ENCODE measurements at regions of chr9 and their contacts with region 1.

Region 1: GRCh38 chr9:92917176-92917800 is 30.0 kb upstream of the FGD3 start:
- DNase-seq: no peak
- H3K4me3 ChIP-seq: no peak overlapping the region
- H3K27ac ChIP-seq: no peak overlapping the region
- H3K4me1 ChIP-seq: no peaks in the 10 kb centered on the region
- H3K27me3 ChIP-seq: peaks cover 0 to 6% of the 10 kb centered on the region in 2 donors
- CTCF ChIP-seq: no peak
- POLR2A ChIP-seq: no peak

Region 2: GRCh38 chr9:91935066-91935749 is 982.1 kb before region 1 on chr9:
- intact Hi-C with region 1: loop called (anchors 5 kb)
- DNase-seq: peak in 1 of 2 donors; percentile 30
- H3K4me3 ChIP-seq: no peak overlapping the region
- H3K27ac ChIP-seq: peak overlapping the region in 1 of 2 donors; percentile 38
- H3K4me1 ChIP-seq: no peaks in the 10 kb centered on the region
- H3K27me3 ChIP-seq: no peaks in the 10 kb centered on the region
- CTCF ChIP-seq: no peak
- POLR2A ChIP-seq: no peak

Region 3: DNA sequence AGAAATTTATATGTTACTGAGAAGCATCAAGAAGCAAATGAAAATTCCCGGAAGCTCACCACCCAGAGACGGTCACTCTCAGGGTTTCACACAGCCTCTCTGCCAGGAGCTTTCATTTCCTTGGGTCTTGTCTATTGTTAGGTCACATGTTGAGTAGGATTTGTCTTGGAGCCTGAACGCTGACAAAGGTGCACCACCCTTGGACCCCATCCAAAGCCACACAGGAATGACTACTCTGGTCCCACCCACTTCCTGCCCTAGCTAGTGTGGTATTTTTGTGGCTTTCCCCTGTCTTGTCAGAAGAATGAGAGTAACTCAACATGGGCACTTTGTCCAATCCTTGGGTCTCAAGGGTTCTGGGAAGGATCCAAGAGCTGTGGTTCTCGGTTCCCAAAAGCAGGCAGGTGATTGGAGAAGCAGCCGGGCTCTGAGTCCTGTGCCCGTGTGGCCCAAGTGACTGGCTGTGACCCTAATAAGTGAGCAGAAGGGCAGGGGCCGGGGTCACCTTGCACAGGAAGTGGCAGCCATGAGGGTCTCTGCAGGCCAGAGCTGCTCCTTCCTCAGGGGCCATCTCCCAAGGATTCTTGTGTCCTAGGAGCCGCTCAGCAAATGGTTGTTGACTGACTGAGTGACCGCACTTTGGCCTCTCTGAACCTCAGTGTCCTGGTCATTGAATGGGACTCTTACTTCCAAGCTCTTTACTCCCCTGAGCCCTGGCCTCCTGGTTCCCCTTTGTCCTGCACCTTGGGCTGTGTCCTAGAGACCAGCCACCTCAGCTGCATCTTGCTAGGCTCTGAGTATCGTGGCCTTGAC is 37.0 kb after region 1 on chr9:
- intact Hi-C with region 1: loop called (anchors 1 kb)
- DNase-seq: peak; percentile 51 to 54
- H3K4me3 ChIP-seq: peak overlapping the region in 1 of 3 donors; percentile 35
- H3K27ac ChIP-seq: peak overlapping the region; percentile 27 to 54
- H3K4me1 ChIP-seq: no peaks in the 10 kb centered on the region
- H3K27me3 ChIP-seq: no peaks in the 10 kb centered on the region
- CTCF ChIP-seq: no peak
- POLR2A ChIP-seq: no peak

Measured in breast epithelium (tissue), 4 donors.